ENCODE measurements at regions of chr3 and their contacts with region 1.

Region 1: GRCh38 chr3:37279236-37279635 is 104.9 kb upstream of the LRRFIP2 start:
- DNase-seq: no peak
- ATAC-seq: no peak
- H3K4me3 ChIP-seq: no peak overlapping the region
- H3K4me3 Mint-ChIP-seq: no peak overlapping the region
- H3K27ac ChIP-seq: no peak overlapping the region
- H3K27ac Mint-ChIP-seq: no peak overlapping the region
- H3K4me1 ChIP-seq: no peaks in the 10 kb centered on the region
- H3K4me1 Mint-ChIP-seq: peaks cover 14% of the 10 kb centered on the region
- H3K27me3 ChIP-seq: no peaks in the 10 kb centered on the region
- H3K27me3 Mint-ChIP-seq: no peaks in the 10 kb centered on the region
- CTCF ChIP-seq: no peak

Region 2: GRCh38 chr3:37262888-37263287 is 16.3 kb before region 1 on chr3:
- CTCF ChIA-PET with region 1: no interaction called
- POLR2A ChIA-PET with region 1: no interaction called
- intact Hi-C with region 1: loop called in 1 of 2 experiments (anchors 1 kb)
- DNase-seq: no peak
- ATAC-seq: no peak
- H3K4me3 ChIP-seq: no peak overlapping the region
- H3K4me3 Mint-ChIP-seq: no peak overlapping the region
- H3K27ac ChIP-seq: no peak overlapping the region
- H3K27ac Mint-ChIP-seq: peak overlapping the region; percentile 39
- H3K4me1 ChIP-seq: peaks cover 18% of the 10 kb centered on the region
- H3K4me1 Mint-ChIP-seq: peaks cover 65% of the 10 kb centered on the region
- H3K27me3 ChIP-seq: no peaks in the 10 kb centered on the region
- H3K27me3 Mint-ChIP-seq: no peaks in the 10 kb centered on the region
- CTCF ChIP-seq: no peak

Region 3: GRCh38 chr3:37474901-37475331 is 195.7 kb after region 1 on chr3:
- CTCF ChIA-PET with region 1: no interaction called
- POLR2A ChIA-PET with region 1: no interaction called
- intact Hi-C with region 1: no loop called
- DNase-seq: no peak
- ATAC-seq: no peak
- H3K4me3 ChIP-seq: no peak overlapping the region
- H3K4me3 Mint-ChIP-seq: no peak overlapping the region
- H3K27ac ChIP-seq: no peak overlapping the region
- H3K27ac Mint-ChIP-seq: no peak overlapping the region
- H3K4me1 ChIP-seq: no peaks in the 10 kb centered on the region
- H3K4me1 Mint-ChIP-seq: no peaks in the 10 kb centered on the region
- H3K27me3 ChIP-seq: peaks cover 0 to 4% of the 10 kb centered on the region in 2 experiments
- H3K27me3 Mint-ChIP-seq: peaks cover 22% of the 10 kb centered on the region
- CTCF ChIP-seq: no peak

Measured in CD4-positive, alpha-beta T cell (primary cell).